Activated CD8-positive, alpha-beta memory T cell treated with anti-CD3 and anti-CD28 coated beads, Interleukin-2, amount 10 ng/mL, durations not matched to agents 7 days and 5 days (primary cell): ENCODE measurements at regions of chr10 and their contacts with region 1.

Region 1: DNA sequence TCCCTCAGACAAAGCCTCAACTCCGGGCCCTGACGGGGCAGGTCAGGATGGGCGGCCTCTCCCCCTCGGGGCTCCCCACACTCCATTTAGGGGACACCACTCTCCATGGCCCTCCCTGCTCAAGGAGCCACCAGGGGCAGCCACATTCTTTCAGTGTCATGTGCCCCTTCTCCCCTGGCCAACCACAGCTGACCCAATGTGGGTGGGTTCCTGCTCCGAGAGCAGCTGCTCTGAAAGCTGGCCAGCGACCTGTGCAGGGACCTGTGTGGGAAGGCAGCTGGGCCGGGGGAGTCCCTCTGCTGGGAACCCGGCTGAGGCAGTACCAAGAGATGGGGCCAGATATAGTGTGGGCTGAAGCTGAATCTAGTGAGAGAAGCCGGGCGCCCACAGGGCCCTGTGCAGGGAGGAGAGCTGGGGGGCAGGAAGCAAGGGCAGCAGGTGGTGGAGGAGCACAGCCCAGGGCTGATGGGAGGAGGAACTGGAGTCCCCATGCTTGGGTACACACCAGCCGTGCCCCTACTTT is 40.6 kb upstream of the NPFFR1 start:
- DNase-seq: peak; percentile 50
- ATAC-seq: peak; percentile 38
- H3K4me3 Mint-ChIP-seq: no peak overlapping the region
- H3K27ac Mint-ChIP-seq: peak overlapping the region; percentile 89
- H3K4me1 Mint-ChIP-seq: peaks cover 43% of the 10 kb centered on the region
- H3K27me3 Mint-ChIP-seq: no peaks in the 10 kb centered on the region

Region 2: GRCh38 chr10:70355051-70356021 is 30.9 kb after region 1 on chr10:
- CTCF ChIA-PET with region 1: interaction called, 11 read pairs
- DNase-seq: peak; percentile 69
- ATAC-seq: peak; percentile 84
- H3K4me3 Mint-ChIP-seq: peak overlapping the region; percentile 73
- H3K27ac Mint-ChIP-seq: peak overlapping the region; percentile 97
- H3K4me1 Mint-ChIP-seq: peaks cover 54% of the 10 kb centered on the region
- H3K27me3 Mint-ChIP-seq: no peaks in the 10 kb centered on the region